WTC11 (cell line): ENCODE measurements at regions of chr3 and their contacts with region 1.

Region 1: GRCh38 chr3:23761440-23761896 is 44.3 kb upstream of the UBE2E1 start:
- DNase-seq: no peak
- ATAC-seq: peak; percentile 82
- H3K4me3 Mint-ChIP-seq: no peak overlapping the region
- H3K27ac Mint-ChIP-seq: peak overlapping the region; percentile 90; the same call in 1 of the 2 replicates
- H3K4me1 Mint-ChIP-seq: peaks cover 44% of the 10 kb centered on the region
- H3K27me3 Mint-ChIP-seq: no peaks in the 10 kb centered on the region
- CTCF ChIP-seq: no peak

Region 2: GRCh38 chr3:23712656-23713559 is 48.6 kb before region 1 on chr3:
- CTCF ChIA-PET with region 1: interaction called, 14 read pairs
- POLR2A ChIA-PET with region 1: no interaction called
- DNase-seq: peak; percentile 74
- ATAC-seq: peak; percentile 91
- H3K4me3 Mint-ChIP-seq: no peak overlapping the region
- H3K27ac Mint-ChIP-seq: peak overlapping the region; percentile 18
- H3K4me1 Mint-ChIP-seq: peaks cover 40% of the 10 kb centered on the region
- H3K27me3 Mint-ChIP-seq: no peaks in the 10 kb centered on the region
- CTCF ChIP-seq: no peak

Region 3: GRCh38 chr3:23751212-23751723 is 10.2 kb before region 1 on chr3:
- CTCF ChIA-PET with region 1: interaction called, 20 read pairs
- POLR2A ChIA-PET with region 1: interaction called, 5 read pairs
- DNase-seq: peak; percentile 43
- ATAC-seq: peak; percentile 85
- H3K4me3 Mint-ChIP-seq: peak overlapping the region; percentile 55
- H3K27ac Mint-ChIP-seq: peak overlapping the region; percentile 73
- H3K4me1 Mint-ChIP-seq: peaks cover 53% of the 10 kb centered on the region
- H3K27me3 Mint-ChIP-seq: peaks cover 1% of the 10 kb centered on the region
- CTCF ChIP-seq: no peak